ENCODE measurements at regions of chr5 and their contacts with region 1.

Region 1: GRCh38 chr5:131263648-131264450 is at the start of gene CDC42SE2:
- DNase-seq: peak; percentile 92
- ATAC-seq: peak; percentile 99
- total RNA-seq, gene CDC42SE2: 9.3 TPM

Region 2: DNA sequence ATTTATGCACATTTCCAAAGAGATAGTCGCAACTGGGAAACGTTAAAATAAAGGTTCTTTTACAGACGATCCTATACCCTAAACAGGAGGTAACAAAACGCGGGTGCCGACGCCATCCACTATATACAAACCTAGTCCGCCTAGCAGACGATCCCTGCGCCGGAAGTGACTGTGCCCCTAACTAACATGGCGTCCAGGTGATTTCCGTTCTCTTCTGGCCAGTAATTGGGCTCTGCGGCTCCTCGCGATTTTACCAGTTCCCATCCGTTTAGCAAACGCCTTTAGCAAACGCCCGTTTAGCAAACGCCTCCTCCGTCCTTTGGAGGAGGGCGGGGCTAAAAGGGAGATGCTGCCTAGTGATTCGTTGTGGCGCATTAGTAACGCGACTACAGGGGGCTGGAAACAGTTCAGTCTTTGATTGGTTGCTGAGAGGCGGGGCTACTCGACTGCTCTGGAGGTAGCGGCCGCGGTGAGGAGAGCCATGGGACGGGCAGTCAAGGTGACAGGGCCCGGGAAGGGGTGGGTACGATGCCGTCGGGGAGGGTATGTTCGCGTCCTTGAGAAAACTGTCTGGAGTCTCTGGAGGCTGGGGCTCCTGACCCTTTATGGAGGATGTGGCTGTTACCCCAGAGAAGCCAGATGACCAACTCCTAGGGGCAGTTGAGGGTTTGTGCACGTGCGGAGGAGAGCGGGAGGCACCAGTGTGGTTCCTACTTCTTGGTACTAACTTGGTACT is 93.1 kb before region 1 on chr5 and contains the start of gene LYRM7:
- intact Hi-C with region 1: loop called (anchors 5 kb)
- DNase-seq: peak; percentile 96
- ATAC-seq: peak; percentile 99
- total RNA-seq, gene LYRM7: 29.7 TPM

Region 3: DNA sequence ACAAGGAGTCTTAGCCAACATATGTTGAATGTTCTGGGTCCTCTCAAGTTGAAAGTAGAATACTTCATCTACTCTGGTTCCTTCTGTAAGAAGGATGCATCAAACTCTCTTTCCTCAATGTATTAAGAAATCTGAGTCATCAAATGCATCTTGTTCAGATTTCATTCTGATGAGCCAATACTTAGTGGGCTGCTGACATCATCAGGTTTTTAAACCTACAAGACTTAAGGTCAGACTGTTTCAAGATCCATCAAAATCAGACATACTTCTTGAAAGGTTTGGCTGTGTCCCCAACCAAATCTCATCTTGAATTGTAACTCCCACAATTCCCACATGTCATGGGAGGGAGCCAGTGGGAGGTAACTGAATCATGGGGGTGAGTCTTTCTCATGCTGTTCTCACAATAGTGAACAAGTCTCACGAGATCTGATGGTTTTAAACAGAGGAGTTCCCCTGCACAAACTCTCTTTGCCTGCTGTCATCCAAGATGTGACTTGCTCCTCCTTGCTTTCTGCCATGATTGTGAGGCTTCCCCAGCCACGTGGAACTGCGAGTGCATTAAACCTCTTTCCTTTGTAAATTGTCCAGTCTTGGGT is 202.4 kb after region 1 on chr5:
- intact Hi-C with region 1: no loop called
- DNase-seq: no peak
- ATAC-seq: no peak